Astrocyte of the cerebellum (primary cell): ENCODE measurements at regions of chr6 and their contacts with region 1.

Region 1: GRCh38 chr6:105087571-105088211 is 92.1 kb downstream of the POPDC3 start:
- DNase-seq: peak; percentile 55
- H3K4me3 ChIP-seq: no peak overlapping the region
- CTCF ChIP-seq: peak; percentile 67

Region 2: GRCh38 chr6:104483225-104483834 is 604.4 kb before region 1 on chr6:
- in situ Hi-C with region 1: no loop called
- DNase-seq: no peak
- H3K4me3 ChIP-seq: no peak overlapping the region
- CTCF ChIP-seq: no peak

Region 3: DNA sequence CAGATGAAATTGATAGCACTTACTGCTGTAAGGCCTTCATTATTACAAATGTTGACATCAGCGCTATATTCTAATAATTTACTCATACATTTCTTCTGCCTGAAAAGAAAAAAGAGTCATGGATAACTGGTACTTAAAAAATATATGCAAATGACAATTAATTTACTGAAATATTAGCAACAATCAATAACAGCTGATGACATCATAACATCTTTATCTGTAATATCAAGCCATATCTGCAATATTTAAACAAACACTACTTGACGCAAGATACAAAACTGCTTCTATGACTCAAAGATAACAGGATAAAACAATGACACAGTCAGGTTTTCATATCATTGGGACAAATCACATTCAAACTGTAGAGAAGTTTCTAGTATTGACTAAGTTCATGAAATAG is 244.5 kb before region 1 on chr6:
- in situ Hi-C with region 1: no loop called
- DNase-seq: no peak
- H3K4me3 ChIP-seq: no peak overlapping the region
- CTCF ChIP-seq: no peak

Region 4: GRCh38 chr6:105409734-105410133 is 322.0 kb after region 1 on chr6:
- in situ Hi-C with region 1: loop called (anchors 10 kb)
- DNase-seq: no peak
- H3K4me3 ChIP-seq: no peak overlapping the region
- CTCF ChIP-seq: no peak